Heart right ventricle (tissue), 16 donors: ENCODE measurements at regions of chr19 and their contacts with region 1.

Region 1: DNA sequence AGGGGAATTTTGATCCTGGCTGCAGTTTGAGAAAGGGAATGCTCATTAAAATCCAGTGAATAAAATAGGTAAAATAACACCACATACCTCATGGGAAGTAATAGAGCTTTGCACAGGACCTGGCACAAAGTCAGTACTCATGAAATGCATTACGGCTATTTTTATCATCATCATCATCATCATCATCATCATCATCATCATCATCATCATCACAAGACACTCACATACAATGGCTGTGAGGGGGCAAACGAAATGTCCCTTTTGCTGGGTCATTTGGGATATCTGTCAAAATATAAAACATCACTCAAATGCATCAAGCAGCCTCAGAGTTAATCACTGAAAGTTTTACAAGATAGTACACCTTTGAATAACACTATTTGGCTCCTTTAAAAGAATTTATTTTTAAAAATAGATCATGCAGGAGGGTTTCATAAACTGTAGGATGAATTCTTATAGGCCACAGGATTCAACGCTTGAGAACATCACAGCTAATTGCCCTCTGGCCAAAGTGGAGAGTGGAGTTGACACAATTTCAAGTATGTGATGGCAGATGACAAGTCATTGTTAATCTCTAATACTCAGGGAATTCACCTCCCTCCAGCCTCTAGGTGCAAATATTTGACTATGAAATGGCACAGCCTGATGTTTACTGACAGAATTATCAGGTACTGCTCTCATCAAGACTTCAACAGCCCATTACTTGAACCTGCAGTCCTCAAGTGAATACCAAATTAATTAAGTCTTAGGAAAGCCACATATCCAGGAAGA is 14.2 kb upstream of the ZNF599 start:
- DNase-seq: no peak
- ATAC-seq: peak in 7 of 8 donors; percentile 28 to 73 (median 65)
- H3K4me3 ChIP-seq: no peak overlapping the region
- H3K27ac ChIP-seq: no peak overlapping the region
- H3K4me1 ChIP-seq: no peaks in the 10 kb centered on the region
- H3K27me3 ChIP-seq: peaks cover 0 to 22% (median 5%) of the 10 kb centered on the region in 7 donors
- CTCF ChIP-seq: no peak

Region 2: DNA sequence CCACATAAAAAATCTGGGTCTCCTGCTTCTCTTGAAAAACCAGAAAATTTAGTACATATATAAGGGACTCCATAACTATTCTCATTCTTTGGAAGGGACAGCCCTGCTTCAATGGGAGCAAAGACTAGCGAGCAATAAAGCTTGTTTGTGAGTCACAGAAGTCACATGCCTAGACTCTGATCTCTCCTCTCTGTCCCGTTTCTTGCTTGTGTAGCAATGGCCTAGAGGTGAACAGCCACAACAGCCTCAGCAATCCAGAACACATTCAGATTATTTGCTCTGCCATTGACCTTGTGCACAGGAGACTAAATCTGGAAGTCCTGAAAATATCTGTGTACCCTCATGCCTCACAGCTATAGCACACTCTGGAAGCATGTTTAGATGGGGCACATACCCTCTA is 153.4 kb before region 1 on chr19:
- intact Hi-C with region 1: no loop called
- DNase-seq: no peak
- ATAC-seq: no peak
- H3K4me3 ChIP-seq: no peak overlapping the region
- H3K27ac ChIP-seq: no peak overlapping the region
- H3K4me1 ChIP-seq: no peaks in the 10 kb centered on the region
- H3K27me3 ChIP-seq: no peaks in the 10 kb centered on the region
- CTCF ChIP-seq: no peak

Region 3: DNA sequence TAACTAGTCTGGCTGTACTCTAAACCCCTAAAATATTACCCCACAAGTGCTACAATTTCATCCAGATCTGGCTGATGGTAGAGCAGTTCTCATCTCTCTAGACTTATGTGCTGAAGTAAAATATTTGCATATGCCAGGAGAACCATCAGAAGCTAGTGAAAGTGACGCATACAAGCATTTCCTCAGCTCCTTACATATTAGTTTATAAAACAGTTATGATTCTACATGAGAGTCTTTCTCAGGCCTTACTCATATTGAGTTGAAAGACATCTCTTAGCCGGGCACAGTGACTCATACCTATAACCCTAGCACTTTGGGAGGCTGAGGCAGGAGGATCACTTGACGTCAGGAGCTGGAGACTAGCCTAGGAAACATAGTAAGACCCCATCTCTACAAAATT is 123.5 kb after region 1 on chr19:
- intact Hi-C with region 1: loop called in 1 of 10 experiments (anchors 10 kb)
- DNase-seq: no peak
- ATAC-seq: no peak
- H3K4me3 ChIP-seq: no peak overlapping the region
- H3K27ac ChIP-seq: no peak overlapping the region
- H3K4me1 ChIP-seq: no peaks in the 10 kb centered on the region
- H3K27me3 ChIP-seq: peaks cover 0 to 28% (median 24%) of the 10 kb centered on the region in 7 donors
- CTCF ChIP-seq: no peak